Activated T-helper 2 cell treated with anti-CD3 and anti-CD28 coated beads, Interferon-gamma antibody, Interleukin-2, Interleukin-4, amounts not matched to agents 10 μg/mL and 5 μg/mL and 100 μg/mL, durations not matched to agents 14 hours and 24 hours and 36 hours (primary cell): ENCODE measurements at regions of chr13 and their contacts with region 1.

Region 1: GRCh38 chr13:109786457-109787134 is at the start of gene IRS2:
- DNase-seq: peak; percentile 92
- H3K4me3 Mint-ChIP-seq: peak within 1 kb of the TSS; percentile 81
- H3K27ac Mint-ChIP-seq: peak within 1 kb of the TSS; percentile 73
- H3K4me1 Mint-ChIP-seq: peaks cover 26% of the 10 kb centered on the region
- H3K27me3 Mint-ChIP-seq: peaks cover 16% of the 10 kb centered on the region
- total RNA-seq, gene IRS2: 5.0 and 5.5 TPM in 2 replicates

Region 2: DNA sequence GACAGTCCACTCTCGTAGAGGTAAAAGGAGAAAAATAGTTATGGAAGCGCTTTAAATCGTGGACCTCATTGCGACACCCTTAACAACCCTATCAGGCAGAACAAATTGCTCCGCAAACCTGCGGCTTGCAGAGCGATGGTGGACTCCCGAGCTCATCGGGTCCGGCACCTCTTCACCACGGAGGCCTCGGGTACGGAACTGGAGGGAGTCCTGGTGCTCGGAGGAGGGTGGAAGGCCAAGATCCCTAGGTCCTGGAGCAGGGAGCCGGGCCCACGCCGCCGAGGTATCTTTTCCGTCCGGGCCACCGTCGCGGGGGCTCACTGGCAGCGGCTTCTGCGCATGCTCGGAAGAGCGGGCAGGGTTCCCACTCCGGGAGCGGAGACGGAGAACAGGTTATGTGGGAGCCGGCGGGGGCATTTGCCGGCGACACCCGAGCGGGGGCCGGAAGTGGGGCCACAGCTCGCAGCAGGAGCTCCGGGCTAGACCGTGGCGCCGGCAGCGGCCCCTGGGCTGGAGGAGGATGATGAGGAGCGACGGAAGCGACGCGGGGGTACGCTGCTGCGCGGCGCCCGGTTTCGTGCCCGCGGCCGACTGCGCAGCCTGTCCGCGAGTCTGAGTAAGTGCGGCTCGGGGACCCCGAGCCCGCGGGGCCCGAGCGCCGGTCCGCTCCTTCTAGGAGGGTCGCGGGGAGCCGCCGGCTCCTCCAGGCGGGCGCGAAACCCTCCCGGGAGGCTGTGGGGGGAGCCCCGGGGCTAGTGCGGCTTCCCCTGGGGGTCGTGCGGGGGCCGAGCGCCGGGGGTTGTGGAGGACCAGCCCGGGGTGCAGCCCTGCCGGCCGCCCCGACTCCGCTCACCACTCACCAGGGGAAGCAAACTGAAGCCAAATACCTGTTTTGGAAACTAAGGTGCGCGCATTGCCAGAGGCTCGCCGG is 1568.3 kb before region 1 on chr13 and contains the start of gene ABHD13:
- intact Hi-C with region 1: loop called (anchors 5 kb)
- DNase-seq: peak; percentile 88
- H3K4me3 Mint-ChIP-seq: peak within 1 kb of the TSS; percentile 91
- H3K27ac Mint-ChIP-seq: peak within 1 kb of the TSS; percentile 88
- H3K4me1 Mint-ChIP-seq: peaks cover 30% of the 10 kb centered on the region
- H3K27me3 Mint-ChIP-seq: no peaks in the 10 kb centered on the region
- total RNA-seq, gene ABHD13: 6.0 and 6.8 TPM in 2 replicates

Region 3: GRCh38 chr13:108961542-108962125 is 825.0 kb before region 1 on chr13:
- intact Hi-C with region 1: loop called (anchors 5 kb)
- DNase-seq: no peak
- H3K4me3 Mint-ChIP-seq: no peak overlapping the region
- H3K27ac Mint-ChIP-seq: no peak overlapping the region
- H3K4me1 Mint-ChIP-seq: no peaks in the 10 kb centered on the region
- H3K27me3 Mint-ChIP-seq: peaks cover 2% of the 10 kb centered on the region

Region 4: GRCh38 chr13:109162248-109163053 is 624.1 kb before region 1 on chr13:
- intact Hi-C with region 1: loop called (anchors 5 kb)
- DNase-seq: peak; percentile 11
- H3K4me3 Mint-ChIP-seq: no peak overlapping the region
- H3K27ac Mint-ChIP-seq: no peak overlapping the region
- H3K4me1 Mint-ChIP-seq: peaks cover 19% of the 10 kb centered on the region
- H3K27me3 Mint-ChIP-seq: peaks cover 13% of the 10 kb centered on the region

Region 5: DNA sequence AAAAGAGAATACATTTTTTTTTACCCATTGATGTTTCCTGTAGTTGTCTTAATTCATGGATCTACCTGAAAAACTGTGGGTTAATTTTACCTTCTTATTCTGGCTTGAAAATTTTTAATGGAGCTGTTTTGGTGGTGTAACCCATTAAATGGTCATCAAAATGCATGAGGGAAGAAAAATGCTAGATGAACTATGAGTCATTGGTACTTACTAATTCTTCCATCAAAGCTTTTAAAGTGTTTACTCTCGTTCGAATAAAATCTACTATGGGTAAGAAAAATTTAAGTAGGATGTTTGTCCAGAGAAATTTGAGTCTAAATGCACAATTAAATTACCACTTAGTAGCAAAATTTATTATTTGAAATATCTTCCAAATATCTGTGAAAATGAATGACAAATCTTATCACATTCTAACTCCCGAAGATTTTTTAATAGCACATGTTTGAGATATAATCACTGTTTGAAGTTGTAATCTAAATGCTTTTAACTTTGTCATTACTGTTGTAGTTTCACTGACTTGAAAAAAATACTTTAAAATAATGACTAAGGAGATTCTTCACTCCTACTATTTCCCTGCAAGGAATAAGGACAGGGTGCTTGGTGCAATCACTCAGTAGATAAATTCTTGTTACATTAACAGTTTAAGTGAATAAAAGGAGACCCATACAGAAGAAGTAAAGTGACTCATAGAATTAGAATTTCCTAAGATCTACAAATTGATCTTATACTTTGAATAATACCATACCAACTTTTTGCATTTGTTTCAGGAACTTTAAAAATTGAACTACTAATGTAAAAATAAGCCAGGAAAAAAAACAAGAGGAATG is 437.9 kb before region 1 on chr13:
- intact Hi-C with region 1: no loop called
- DNase-seq: no peak
- H3K4me3 Mint-ChIP-seq: no peak overlapping the region
- H3K27ac Mint-ChIP-seq: no peak overlapping the region
- H3K4me1 Mint-ChIP-seq: no peaks in the 10 kb centered on the region
- H3K27me3 Mint-ChIP-seq: no peaks in the 10 kb centered on the region

Region 6: GRCh38 chr13:109610517-109610916 is 176.1 kb before region 1 on chr13:
- intact Hi-C with region 1: loop called (anchors 5 kb)
- DNase-seq: peak; percentile 11
- H3K4me3 Mint-ChIP-seq: no peak overlapping the region
- H3K27ac Mint-ChIP-seq: no peak overlapping the region
- H3K4me1 Mint-ChIP-seq: no peaks in the 10 kb centered on the region
- H3K27me3 Mint-ChIP-seq: peaks cover 6% of the 10 kb centered on the region

Region 7: GRCh38 chr13:110138010-110138699 is 351.6 kb after region 1 on chr13:
- intact Hi-C with region 1: loop called (anchors 5 kb)
- DNase-seq: peak; percentile 67
- H3K4me3 Mint-ChIP-seq: peak overlapping the region; percentile 76
- H3K27ac Mint-ChIP-seq: peak overlapping the region; percentile 60
- H3K4me1 Mint-ChIP-seq: peaks cover 14% of the 10 kb centered on the region
- H3K27me3 Mint-ChIP-seq: peaks cover 60% of the 10 kb centered on the region